Caco-2 (cell line): ENCODE measurements at regions of chr1 and their contacts with region 1.

Region 1: DNA sequence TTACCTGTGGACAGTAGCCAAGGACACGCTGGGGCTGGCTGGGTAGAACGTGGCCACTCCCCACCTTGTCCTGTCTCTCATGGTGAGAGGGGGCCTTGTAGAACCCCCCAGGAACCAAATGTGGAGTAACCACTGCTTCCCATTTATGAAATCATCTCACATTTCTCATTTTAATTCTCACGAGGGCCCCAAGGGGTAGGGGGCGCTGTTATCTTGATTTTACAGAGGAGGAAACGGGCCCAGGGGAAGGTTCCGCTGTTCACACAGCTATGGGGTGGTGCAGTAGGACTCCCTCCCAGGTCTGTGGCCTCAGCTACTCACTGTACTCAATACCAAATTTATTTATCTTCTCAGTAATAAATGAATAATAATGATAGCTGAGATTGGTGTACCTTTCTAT is 5.5 kb downstream of the SMPDL3B start:
- DNase-seq: peak in 1 of 2 experiments; percentile 37
- H3K4me3 ChIP-seq: no peak overlapping the region
- H3K4me3 Mint-ChIP-seq: no peak overlapping the region
- H3K27ac Mint-ChIP-seq: no peak overlapping the region
- H3K4me1 ChIP-seq: peaks cover 9% of the 10 kb centered on the region
- H3K4me1 Mint-ChIP-seq: peaks cover 13% of the 10 kb centered on the region
- H3K27me3 ChIP-seq: no peaks in the 10 kb centered on the region
- H3K27me3 Mint-ChIP-seq: no peaks in the 10 kb centered on the region
- CTCF ChIP-seq: peak in 1 of 2 experiments; percentile 16

Region 2: GRCh38 chr1:27979151-27979858 is 39.0 kb after region 1 on chr1:
- CTCF ChIA-PET with region 1: no interaction called
- POLR2A ChIA-PET with region 1: no interaction called
- intact Hi-C with region 1: loop called (anchors 5 kb)
- DNase-seq: peak in 1 of 2 experiments; percentile 24
- H3K4me3 ChIP-seq: no peak overlapping the region
- H3K4me3 Mint-ChIP-seq: no peak overlapping the region
- H3K27ac Mint-ChIP-seq: no peak overlapping the region
- H3K4me1 ChIP-seq: no peaks in the 10 kb centered on the region
- H3K4me1 Mint-ChIP-seq: no peaks in the 10 kb centered on the region
- H3K27me3 ChIP-seq: no peaks in the 10 kb centered on the region
- H3K27me3 Mint-ChIP-seq: no peaks in the 10 kb centered on the region
- CTCF ChIP-seq: peak; percentile 30 to 47

Region 3: GRCh38 chr1:27992276-27992675 is 52.0 kb after region 1 on chr1:
- CTCF ChIA-PET with region 1: no interaction called
- POLR2A ChIA-PET with region 1: no interaction called
- intact Hi-C with region 1: no loop called
- DNase-seq: no peak
- H3K4me3 ChIP-seq: no peak overlapping the region
- H3K4me3 Mint-ChIP-seq: no peak overlapping the region
- H3K27ac Mint-ChIP-seq: no peak overlapping the region
- H3K4me1 ChIP-seq: no peaks in the 10 kb centered on the region
- H3K4me1 Mint-ChIP-seq: no peaks in the 10 kb centered on the region
- H3K27me3 ChIP-seq: no peaks in the 10 kb centered on the region
- H3K27me3 Mint-ChIP-seq: no peaks in the 10 kb centered on the region
- CTCF ChIP-seq: no peak